PC-9 (cell line): ENCODE measurements at regions of chr21 and their contacts with region 1.

Region 1: GRCh38 chr21:42056996-42057689 is 14.0 kb upstream of the UMODL1 start:
- DNase-seq: peak; percentile 62 to 90
- H3K4me3 ChIP-seq: peak overlapping the region; percentile 51; the same call in 1 of the 2 replicates
- H3K27ac ChIP-seq: peak overlapping the region; percentile 32
- H3K4me1 ChIP-seq: peaks cover 26% of the 10 kb centered on the region
- H3K27me3 ChIP-seq: peaks cover 5% of the 10 kb centered on the region; the same call in 1 of the 2 replicates
- CTCF ChIP-seq: no peak

Region 2: GRCh38 chr21:42093991-42094421 is 36.9 kb after region 1 on chr21:
- CTCF ChIA-PET with region 1: no interaction called
- POLR2A ChIA-PET with region 1: no interaction called
- intact Hi-C with region 1: loop called (anchors 2 kb)
- DNase-seq: peak; percentile 75 to 90
- H3K4me3 ChIP-seq: peak overlapping the region; percentile 24; the same call in 1 of the 2 replicates
- H3K27ac ChIP-seq: peak overlapping the region; percentile 75
- H3K4me1 ChIP-seq: peaks cover 37% of the 10 kb centered on the region
- H3K27me3 ChIP-seq: no peaks in the 10 kb centered on the region
- CTCF ChIP-seq: no peak